ENCODE measurements at regions of chr1 and their contacts with region 1.

Region 1: DNA sequence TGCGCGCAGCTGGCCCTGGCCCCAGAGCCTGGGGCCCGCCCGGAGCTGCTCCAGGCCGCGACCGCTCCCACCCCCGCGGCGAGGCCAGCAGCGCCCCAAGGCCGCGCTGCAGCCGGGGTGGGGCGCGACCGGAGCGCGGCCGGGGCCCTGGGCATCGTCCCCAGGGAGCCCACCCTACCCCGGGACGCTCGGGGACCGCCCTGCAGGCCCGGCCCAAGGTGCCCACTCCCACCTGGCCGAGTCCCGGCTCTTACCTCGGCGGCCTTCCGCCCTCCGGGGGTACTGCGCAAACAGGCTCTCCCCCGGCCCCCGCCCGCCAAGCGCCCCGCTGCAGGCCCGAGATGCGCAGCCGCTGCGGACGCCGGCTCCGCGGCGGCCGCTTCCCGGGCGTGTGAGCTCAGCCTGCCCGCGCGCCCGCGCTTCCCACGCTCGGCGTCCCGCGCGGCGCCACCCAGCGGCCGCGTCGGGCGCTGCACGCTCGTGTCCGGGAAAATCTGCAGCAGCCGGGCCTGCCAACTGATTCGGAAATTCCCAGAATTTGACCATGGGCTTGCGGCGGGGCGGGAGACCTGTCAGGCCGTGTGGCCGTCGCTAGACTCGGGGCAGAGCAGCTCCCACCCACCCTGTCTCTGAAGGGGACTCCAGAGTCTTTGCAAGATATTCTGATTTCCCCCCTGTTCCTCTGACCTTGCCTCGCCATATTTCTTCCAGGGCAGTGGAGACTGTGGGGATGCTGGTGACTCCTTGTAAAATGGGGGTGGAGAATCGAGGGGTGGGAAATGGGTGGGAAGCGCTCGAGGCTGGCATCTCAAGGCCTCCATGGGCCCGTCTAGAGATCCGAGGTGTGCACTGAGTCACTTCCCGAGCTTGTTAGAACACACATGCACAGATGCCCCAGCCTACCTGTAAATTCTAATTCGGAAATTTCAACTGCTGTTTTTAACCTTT is 41.9 kb downstream of the CD34 start:
- DNase-seq: peak; percentile 92
- ATAC-seq: peak; percentile 51

Region 2: GRCh38 chr1:207828485-207829158 is 40.4 kb before region 1 on chr1:
- intact Hi-C with region 1: loop called (anchors 1 kb)
- DNase-seq: peak; percentile 87
- ATAC-seq: peak; percentile 59

Region 3: DNA sequence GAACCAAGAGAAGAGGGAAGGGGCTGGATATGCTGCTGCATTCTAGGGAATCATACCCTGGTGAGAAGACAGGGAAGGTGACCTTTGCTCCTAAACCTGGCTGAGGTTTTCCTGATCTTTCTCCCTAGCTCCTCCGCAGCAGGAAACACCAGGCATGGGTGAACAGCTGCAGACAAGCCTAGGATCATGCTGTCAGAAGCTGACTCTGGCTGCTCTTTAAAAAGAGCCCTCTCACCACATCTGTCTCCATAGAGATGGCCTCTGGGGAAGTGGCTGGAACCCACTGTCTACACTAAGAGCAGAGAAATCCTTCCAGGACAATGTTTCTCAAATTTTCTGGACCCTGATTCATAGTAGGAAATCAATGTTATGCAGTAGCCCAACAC is 15.7 kb before region 1 on chr1:
- intact Hi-C with region 1: loop called (anchors 2 kb)
- DNase-seq: peak; percentile 55
- ATAC-seq: peak; percentile 69

Region 4: DNA sequence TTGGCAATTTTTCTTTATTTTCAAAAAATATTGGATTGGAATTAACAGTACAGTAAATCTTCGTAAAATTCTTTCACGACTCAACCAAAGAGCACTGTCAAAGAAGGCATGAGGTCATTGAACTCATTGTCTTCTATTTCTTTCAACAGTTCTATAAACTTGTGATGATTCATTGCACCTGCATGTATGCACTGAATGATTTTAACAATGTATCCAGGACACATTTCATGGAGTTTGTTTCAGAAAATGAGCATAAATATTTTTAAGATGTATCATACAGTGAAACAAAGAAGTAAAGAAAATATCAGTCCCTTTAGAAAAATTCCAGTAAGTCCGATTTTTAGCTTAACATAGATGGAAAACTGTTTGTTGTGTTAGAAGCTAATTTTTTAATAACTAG is 75.5 kb after region 1 on chr1:
- intact Hi-C with region 1: no loop called
- DNase-seq: no peak
- ATAC-seq: no peak